Upper lobe of right lung (tissue), 1 donor: ENCODE measurements at regions of chr20 and their contacts with region 1.

Region 1: GRCh38 chr20:51639206-51639832 is 96.8 kb upstream of the NFATC2 start:
- DNase-seq: no peak
- ATAC-seq: peak; percentile 90
- H3K4me3 ChIP-seq: no peak overlapping the region
- H3K27ac ChIP-seq: no peak overlapping the region
- H3K4me1 ChIP-seq: no peaks in the 10 kb centered on the region
- H3K27me3 ChIP-seq: no peaks in the 10 kb centered on the region
- CTCF ChIP-seq: peak; percentile 82

Region 2: DNA sequence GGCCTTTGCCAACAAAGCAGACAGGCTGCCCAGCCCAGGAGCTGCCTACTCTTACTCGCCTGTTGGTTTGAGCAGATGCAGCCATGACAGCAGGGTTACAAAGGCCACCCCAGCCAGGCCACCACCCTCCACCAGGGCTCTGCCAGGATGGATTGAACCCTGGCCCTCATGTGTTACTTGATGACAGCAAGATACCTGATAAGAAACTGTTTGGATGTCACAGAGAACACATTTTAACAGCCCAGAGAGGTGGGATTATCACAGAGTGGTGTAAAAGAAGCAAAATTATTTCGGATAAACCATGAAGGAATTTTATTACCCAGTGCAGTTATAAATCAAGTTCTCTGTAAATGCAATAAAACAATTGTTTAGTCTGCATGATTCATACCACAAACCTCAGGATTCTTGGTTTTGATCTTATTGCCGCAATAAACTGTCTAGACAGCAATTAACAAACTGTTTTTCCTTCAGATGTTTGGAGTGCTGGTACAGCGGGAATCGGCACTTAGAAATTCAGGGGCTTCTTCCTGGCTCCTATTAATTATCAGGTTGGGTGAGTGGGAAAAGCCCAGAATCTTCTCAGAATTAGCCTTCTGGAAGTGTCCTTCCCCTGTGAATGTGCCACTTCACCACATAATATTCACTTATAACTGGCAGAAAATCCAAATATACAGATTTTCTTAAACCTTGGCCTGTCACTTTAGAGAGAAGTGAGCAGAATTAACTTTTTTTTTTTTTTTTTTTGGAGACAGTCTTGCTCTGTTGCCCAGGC is 221.0 kb after region 1 on chr20:
- intact Hi-C with region 1: no loop called
- DNase-seq: no peak
- ATAC-seq: no peak
- H3K4me3 ChIP-seq: no peak overlapping the region
- H3K27ac ChIP-seq: no peak overlapping the region
- H3K4me1 ChIP-seq: no peaks in the 10 kb centered on the region
- H3K27me3 ChIP-seq: no peaks in the 10 kb centered on the region
- CTCF ChIP-seq: no peak

Region 3: DNA sequence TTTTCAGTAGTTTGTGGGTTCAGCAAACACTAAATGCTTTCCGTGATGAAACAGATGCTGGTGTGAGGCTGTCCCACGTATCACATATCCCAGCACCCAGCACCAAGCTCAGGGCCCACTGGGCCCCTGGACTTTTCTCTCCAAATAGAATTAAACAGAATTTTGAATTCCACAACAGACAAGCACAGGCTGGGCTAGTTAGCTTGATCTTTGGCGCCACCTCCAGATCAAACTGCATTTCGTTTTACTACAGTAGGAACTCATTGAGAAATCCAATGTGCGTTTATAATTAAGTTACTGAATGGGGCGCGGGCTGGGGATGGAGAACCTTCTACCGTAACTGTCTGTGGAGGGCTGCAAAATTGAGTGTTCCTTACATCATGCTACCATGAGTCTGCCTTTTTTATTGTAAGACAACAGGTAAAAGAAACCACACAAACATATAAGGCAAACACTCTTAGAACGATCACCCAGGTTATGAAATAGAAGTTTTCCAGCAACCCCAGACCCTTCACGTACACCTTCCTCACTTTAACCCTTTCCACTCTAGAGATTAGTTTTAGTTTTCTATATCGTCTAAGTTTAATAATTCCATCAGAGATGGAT is 444.4 kb after region 1 on chr20:
- intact Hi-C with region 1: loop called (anchors 5 kb)
- DNase-seq: no peak
- ATAC-seq: peak; percentile 66
- H3K4me3 ChIP-seq: no peak overlapping the region
- H3K27ac ChIP-seq: no peak overlapping the region
- H3K4me1 ChIP-seq: no peaks in the 10 kb centered on the region
- H3K27me3 ChIP-seq: no peaks in the 10 kb centered on the region
- CTCF ChIP-seq: peak; percentile 56

Region 4: DNA sequence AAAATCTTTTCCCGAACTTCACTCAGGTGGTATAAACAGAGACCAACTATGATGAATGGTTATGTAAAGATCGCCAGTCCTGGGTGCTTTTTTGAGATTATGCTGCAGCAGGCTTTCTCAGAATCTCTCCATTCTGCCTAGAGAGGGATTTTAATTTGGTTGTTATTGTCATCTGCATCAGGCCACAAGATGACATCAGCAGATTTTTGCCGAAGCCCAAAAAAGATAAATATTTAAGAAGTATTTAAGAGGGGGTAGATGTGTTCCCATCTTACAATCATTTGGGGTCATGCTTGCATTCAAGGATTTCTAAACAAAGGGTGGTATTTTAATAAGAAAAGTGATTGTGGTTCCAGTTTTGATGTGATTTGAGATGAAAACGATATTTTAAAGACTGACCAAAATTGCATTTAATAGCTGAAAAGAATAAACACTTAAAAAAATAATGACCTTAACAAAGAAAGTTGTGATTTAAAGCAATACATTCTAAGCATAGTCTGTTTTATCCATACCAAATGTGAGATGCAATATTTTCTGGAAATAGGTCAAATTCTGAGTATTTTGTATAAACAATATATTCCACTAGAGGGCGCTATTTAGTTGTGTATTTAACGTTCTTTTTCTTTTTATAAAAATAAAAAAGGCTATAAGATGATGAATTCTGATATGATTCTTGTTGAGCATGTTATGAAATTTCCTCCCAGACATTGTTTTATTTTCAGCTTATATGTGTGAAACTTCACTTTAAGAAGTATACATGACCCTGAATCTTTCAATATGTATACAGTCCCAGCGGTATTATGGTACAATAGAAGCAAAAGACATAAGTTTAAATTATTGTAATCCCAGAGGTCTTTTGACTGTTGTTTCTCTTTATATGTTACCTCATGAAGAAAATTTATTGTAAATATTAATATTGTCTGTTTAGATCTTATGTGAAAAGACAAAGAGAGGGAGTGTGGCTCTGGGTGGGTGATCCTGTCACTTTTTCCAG is 603.2 kb after region 1 on chr20:
- intact Hi-C with region 1: no loop called
- DNase-seq: no peak
- ATAC-seq: no peak
- H3K4me3 ChIP-seq: no peak overlapping the region
- H3K27ac ChIP-seq: no peak overlapping the region
- H3K4me1 ChIP-seq: no peaks in the 10 kb centered on the region
- H3K27me3 ChIP-seq: peaks cover 3% of the 10 kb centered on the region
- CTCF ChIP-seq: peak; percentile 68